ENCODE measurements at regions of chr6 and their contacts with region 1.

Region 1: GRCh38 chr6:22102671-22103070 is 194.2 kb downstream of the PRL start:
- DNase-seq: no peak
- ATAC-seq: peak; percentile 79
- H3K4me3 Mint-ChIP-seq: no peak overlapping the region
- H3K27ac Mint-ChIP-seq: peak overlapping the region; percentile 54
- H3K4me1 Mint-ChIP-seq: peaks cover 9% of the 10 kb centered on the region
- H3K27me3 Mint-ChIP-seq: no peaks in the 10 kb centered on the region
- CTCF ChIP-seq: no peak

Region 2: GRCh38 chr6:21309807-21310221 is 792.9 kb before region 1 on chr6:
- CTCF ChIA-PET with region 1: no interaction called
- POLR2A ChIA-PET with region 1: no interaction called
- intact Hi-C with region 1: no loop called
- DNase-seq: no peak
- ATAC-seq: no peak
- H3K4me3 Mint-ChIP-seq: no peak overlapping the region
- H3K27ac Mint-ChIP-seq: no peak overlapping the region
- H3K4me1 Mint-ChIP-seq: no peaks in the 10 kb centered on the region
- H3K27me3 Mint-ChIP-seq: no peaks in the 10 kb centered on the region
- CTCF ChIP-seq: no peak

Region 3: DNA sequence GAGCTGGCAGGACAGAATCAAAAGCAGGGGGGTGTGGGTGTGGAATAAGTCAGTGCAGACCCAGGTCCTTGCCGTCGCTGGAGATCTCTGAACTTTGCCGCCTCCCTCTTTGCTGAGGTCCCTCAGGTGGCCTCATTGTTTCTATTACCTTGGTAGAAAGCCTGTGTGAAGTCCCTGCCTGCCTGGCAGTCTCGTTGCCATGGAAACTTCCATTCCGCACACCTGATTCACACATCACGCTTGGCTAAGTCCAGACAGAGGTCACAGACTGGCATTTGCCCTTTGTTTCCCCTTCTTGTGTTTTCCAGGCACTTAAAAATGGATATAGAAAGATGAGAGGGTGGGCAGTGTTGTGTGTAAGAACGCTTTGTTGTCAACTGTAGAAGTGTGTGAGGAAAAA is 66.4 kb before region 1 on chr6:
- CTCF ChIA-PET with region 1: no interaction called
- POLR2A ChIA-PET with region 1: no interaction called
- intact Hi-C with region 1: loop called (anchors 2 kb)
- DNase-seq: no peak
- ATAC-seq: peak; percentile 54
- H3K4me3 Mint-ChIP-seq: no peak overlapping the region
- H3K27ac Mint-ChIP-seq: no peak overlapping the region
- H3K4me1 Mint-ChIP-seq: peaks cover 5% of the 10 kb centered on the region
- H3K27me3 Mint-ChIP-seq: no peaks in the 10 kb centered on the region
- CTCF ChIP-seq: no peak

Region 4: GRCh38 chr6:22062807-22063408 is 39.8 kb before region 1 on chr6:
- CTCF ChIA-PET with region 1: no interaction called
- POLR2A ChIA-PET with region 1: no interaction called
- intact Hi-C with region 1: loop called (anchors 2 kb)
- DNase-seq: peak; percentile 28
- ATAC-seq: peak; percentile 79
- H3K4me3 Mint-ChIP-seq: peak overlapping the region; percentile 62
- H3K27ac Mint-ChIP-seq: peak overlapping the region; percentile 84
- H3K4me1 Mint-ChIP-seq: peaks cover 18% of the 10 kb centered on the region
- H3K27me3 Mint-ChIP-seq: no peaks in the 10 kb centered on the region
- CTCF ChIP-seq: no peak